Activated T-helper 2 cell treated with anti-CD3 and anti-CD28 coated beads, Interferon-gamma antibody, Interleukin-2, Interleukin-4, amounts not matched to agents 10 μg/mL and 5 μg/mL and 100 μg/mL, durations not matched to agents 14 hours and 24 hours and 36 hours (primary cell): ENCODE measurements at regions of chr1 and their contacts with region 1.

Region 1: DNA sequence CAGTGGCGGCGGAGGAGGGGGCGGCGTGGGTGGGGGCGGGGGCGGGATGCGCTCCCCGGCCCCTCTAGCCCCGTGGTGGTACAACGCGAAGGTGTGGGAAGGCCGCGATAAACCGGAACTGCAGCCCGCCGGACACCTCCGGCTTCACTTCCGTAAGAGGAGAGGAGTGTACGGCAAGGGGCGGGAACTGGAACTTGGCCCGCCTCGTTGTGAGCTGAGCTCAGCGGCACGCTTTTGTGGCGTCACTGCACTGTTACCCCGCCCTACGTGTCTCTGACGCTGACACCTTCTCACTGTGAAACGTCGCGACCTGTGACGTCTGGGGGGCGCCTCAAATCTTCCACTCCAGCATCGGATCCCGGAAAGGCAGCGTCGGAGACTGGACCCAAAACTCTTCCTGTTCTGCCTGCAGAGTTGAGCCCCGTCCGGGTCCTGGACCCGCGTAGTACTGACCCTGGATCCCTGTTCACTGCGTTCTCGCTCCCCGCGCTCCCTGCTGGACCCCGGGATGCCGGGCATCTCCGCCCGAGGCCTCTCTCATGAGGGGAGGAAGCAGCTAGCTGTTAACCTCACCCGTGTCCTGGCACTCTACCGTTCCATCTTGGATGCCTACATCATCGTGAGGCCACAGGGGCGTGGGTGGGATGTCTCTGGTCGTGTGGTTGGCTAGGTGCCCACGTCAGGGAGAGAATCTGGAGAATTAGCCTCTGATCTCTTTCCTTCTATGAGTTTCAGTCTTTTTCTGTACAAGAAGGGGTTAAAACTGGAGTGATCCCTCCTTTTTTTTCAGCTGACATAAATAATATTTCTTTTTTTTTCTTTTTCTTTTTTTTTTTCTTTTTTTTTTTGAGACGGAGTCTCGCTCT is at the start of gene ISG20L2:
- DNase-seq: peak; percentile 96
- H3K4me3 Mint-ChIP-seq: no peak within 1 kb of the TSS
- H3K27ac Mint-ChIP-seq: peak within 1 kb of the TSS; percentile 99
- H3K4me1 Mint-ChIP-seq: peaks cover 20% of the 10 kb centered on the region
- H3K27me3 Mint-ChIP-seq: no peaks in the 10 kb centered on the region
- total RNA-seq, gene ISG20L2: 52.2 and 57.4 TPM in 2 replicates

Region 2: GRCh38 chr1:156551866-156552265 is 177.0 kb before region 1 on chr1:
- intact Hi-C with region 1: no loop called
- DNase-seq: no peak
- H3K4me3 Mint-ChIP-seq: no peak overlapping the region
- H3K27ac Mint-ChIP-seq: no peak overlapping the region
- H3K4me1 Mint-ChIP-seq: peaks cover 3% of the 10 kb centered on the region
- H3K27me3 Mint-ChIP-seq: no peaks in the 10 kb centered on the region

Region 3: DNA sequence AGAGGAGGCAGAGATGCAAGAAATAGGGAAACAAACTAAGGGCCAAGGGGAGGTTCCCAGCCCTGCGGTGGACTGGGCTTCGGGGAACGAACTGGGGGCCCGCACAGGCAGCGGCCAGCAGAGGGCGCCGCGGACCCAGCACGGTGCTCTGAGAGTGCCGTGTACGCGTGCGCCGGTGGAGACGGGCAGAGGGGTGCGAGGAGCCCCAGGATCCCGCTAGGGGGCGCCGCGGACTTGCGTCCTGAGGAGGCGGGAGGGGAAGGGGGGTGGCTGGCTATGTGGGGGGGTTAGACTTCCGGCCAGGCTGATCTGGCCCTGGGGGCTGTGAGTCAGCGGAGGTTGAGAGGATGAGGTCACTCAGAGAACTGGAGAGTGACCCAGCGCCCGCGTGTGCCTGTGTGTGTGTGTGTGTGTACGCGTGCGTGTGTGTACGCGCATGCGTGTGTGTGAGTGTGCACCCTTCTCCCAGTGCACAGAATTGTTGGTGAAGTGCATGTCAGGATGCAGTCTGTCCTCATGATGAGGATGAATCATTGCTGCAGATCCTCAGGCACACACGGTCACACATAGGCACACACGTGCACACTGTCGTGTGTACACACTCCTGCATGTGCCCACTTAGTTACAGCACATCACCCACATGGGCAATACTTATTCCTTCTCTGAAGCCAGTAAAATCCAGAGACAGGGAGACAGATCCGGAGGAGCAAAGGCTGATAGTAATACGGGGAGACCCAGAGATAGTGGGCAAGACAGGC is 68.7 kb before region 1 on chr1:
- intact Hi-C with region 1: loop called (anchors 2 kb)
- DNase-seq: peak; percentile 89
- H3K4me3 Mint-ChIP-seq: peak overlapping the region; percentile 90
- H3K27ac Mint-ChIP-seq: peak overlapping the region; percentile 97
- H3K4me1 Mint-ChIP-seq: peaks cover 41% of the 10 kb centered on the region
- H3K27me3 Mint-ChIP-seq: peaks cover 26% of the 10 kb centered on the region

Region 4: GRCh38 chr1:156705918-156706656 is 22.7 kb before region 1 on chr1:
- intact Hi-C with region 1: loop called (anchors 1 kb)
- DNase-seq: peak; percentile 50
- H3K4me3 Mint-ChIP-seq: peak overlapping the region; percentile 76
- H3K27ac Mint-ChIP-seq: no peak overlapping the region
- H3K4me1 Mint-ChIP-seq: peaks cover 13% of the 10 kb centered on the region
- H3K27me3 Mint-ChIP-seq: peaks cover 52% of the 10 kb centered on the region

Region 5: GRCh38 chr1:156751758-156752757 is 23.2 kb after region 1 on chr1:
- intact Hi-C with region 1: loop called (anchors 1 kb)
- DNase-seq: peak; percentile 93
- H3K4me3 Mint-ChIP-seq: peak overlapping the region; percentile 97
- H3K27ac Mint-ChIP-seq: peak overlapping the region; percentile 92
- H3K4me1 Mint-ChIP-seq: peaks cover 32% of the 10 kb centered on the region
- H3K27me3 Mint-ChIP-seq: no peaks in the 10 kb centered on the region

Region 6: DNA sequence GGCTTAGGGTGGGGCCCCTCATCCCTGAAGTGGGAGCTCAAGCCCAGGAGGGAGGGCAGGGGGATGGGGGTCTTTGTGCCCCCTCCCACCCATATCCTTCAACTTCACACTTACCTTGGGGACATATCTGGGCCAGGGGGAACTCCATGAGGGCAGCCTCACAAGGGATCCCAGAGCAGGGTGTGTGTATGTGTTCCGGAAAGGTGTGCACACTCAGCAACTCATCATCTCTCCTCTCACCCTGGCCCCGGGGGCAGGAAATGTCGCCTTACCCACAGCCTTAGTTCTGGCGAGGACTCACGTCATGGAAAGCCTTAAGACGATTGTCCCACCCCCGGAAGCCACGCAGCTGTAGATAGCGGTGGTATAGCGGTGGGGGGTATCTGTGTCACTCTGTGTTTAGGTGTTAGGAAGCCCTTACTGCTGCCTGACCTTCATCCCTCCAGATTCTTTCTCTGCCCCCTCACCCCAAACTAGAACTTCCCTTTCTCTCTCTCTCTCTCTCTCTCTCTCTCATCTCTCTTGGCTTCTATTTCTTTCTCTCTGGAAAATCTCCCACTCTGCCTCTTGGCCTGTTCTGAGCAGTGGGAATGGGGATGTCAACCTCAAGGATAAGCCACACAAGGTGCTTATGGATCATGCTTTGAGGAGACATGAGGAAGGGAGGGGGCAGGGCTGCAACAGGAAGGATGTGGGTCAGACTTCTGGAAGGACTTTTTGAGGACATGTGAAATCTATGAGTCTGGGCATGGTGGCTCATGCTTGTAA is 87.9 kb after region 1 on chr1 and contains the start of gene SH2D2A:
- intact Hi-C with region 1: loop called (anchors 2 kb)
- DNase-seq: peak; percentile 94
- H3K4me3 Mint-ChIP-seq: peak within 1 kb of the TSS; percentile 88
- H3K27ac Mint-ChIP-seq: peak within 1 kb of the TSS; percentile 100
- H3K4me1 Mint-ChIP-seq: peaks cover 48% of the 10 kb centered on the region
- H3K27me3 Mint-ChIP-seq: no peaks in the 10 kb centered on the region
- total RNA-seq, gene SH2D2A: 453 and 474 TPM in 2 replicates

Region 7: DNA sequence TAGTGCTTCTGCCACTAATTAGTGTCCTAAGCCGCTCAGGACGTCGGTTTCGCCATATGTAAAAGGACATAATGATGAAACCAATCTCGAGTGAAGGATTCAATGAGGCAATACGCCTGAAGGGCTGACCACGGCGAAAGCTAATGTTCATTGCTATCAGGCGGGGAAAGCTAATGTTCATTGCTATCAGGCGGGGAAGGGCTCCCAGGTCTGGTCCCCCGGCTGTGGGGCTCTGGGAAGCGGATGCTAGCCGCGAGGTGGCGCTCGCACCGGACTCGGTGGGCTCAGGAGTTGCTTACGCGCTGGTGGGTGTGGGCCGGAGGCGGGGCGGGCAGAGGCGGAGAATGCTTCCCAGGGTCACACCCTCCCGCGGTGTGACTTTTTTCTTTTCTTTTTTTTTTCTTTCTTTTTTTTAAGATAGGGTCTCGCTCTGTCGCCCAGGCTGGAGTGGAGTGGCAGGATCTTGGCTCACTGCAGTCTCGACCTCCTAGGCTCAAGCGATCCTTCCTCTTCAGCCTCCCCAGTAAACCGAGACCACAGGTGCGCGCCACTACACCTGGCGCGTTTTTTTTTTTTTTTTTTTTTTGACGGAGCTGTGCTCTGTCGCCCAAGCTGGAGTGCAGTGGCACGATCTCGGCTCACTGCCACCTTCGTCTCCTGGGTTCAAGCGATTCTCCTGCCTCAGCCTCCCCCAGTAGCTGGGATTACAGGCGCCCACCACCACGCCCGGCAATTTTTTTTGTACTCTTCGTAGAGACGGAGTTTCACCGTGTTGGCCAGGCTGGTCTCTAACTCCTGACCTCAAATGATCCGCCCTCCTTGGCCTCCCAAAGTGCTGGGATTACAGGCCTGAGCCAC is 163.6 kb after region 1 on chr1:
- intact Hi-C with region 1: loop called (anchors 5 kb)
- DNase-seq: peak; percentile 80
- H3K4me3 Mint-ChIP-seq: peak overlapping the region; percentile 35
- H3K27ac Mint-ChIP-seq: no peak overlapping the region
- H3K4me1 Mint-ChIP-seq: peaks cover 11% of the 10 kb centered on the region
- H3K27me3 Mint-ChIP-seq: peaks cover 32% of the 10 kb centered on the region